Dorsolateral prefrontal cortex (tissue), 120 donors: ENCODE measurements at regions of chr15 and their contacts with region 1.

Region 1: DNA sequence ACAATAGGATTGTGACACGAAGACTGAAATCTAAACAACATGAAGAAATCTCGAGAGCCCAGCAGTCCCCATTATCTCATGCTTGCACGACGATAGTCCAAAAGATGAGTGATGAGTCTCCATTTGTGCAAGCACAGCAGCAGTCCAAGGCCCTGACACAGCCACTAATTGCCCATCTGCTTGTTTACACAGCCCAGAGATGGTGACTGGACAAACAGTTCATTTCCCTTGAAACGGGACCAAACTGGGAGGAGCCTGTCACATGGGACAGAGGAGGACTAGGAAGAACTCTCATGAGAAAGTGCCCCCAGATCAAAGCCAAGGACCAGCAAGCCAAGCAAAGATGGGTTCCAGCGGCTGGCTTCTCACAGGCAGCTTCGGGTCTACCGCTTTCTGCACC is 121.0 kb downstream of the GREM1 start:
- DNase-seq: peak in 9 of 10 donors; percentile 47 to 83 (median 75)
- H3K4me3 ChIP-seq: peak overlapping the region in 33 of 59 donors; percentile 3 to 53 (median 27)
- H3K27ac ChIP-seq: peak overlapping the region; percentile 23 to 97 (median 88)
- H3K27me3 ChIP-seq: no peaks in the 10 kb centered on the region
- CTCF ChIP-seq: no peak

Region 2: DNA sequence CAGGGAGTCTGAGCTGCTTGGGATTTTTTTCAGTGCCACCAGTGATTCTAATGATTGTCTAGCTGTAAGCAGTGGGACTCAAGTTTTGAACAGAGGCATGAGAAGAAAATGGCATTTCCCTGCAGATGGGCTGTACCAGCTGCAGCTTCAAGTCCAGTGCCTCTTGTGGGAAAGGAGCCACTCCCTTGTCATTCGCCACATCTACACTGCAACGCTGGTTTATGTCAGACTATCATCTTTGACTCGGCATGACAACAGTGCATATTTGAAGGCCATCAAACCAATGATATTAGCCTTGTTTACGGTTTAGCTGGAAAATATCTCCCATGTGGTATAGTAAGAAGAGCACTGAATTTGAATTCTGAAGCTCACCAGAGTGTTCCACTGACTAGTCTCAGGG is 175.1 kb before region 1 on chr15:
- intact Hi-C with region 1: loop called in 1 of 2 experiments (anchors 2 kb)
- DNase-seq: no peak
- H3K4me3 ChIP-seq: no peak overlapping the region
- H3K27ac ChIP-seq: peak overlapping the region in 16 of 59 donors; percentile 4 to 51 (median 30)
- H3K27me3 ChIP-seq: no peaks in the 10 kb centered on the region
- CTCF ChIP-seq: no peak

Region 3: DNA sequence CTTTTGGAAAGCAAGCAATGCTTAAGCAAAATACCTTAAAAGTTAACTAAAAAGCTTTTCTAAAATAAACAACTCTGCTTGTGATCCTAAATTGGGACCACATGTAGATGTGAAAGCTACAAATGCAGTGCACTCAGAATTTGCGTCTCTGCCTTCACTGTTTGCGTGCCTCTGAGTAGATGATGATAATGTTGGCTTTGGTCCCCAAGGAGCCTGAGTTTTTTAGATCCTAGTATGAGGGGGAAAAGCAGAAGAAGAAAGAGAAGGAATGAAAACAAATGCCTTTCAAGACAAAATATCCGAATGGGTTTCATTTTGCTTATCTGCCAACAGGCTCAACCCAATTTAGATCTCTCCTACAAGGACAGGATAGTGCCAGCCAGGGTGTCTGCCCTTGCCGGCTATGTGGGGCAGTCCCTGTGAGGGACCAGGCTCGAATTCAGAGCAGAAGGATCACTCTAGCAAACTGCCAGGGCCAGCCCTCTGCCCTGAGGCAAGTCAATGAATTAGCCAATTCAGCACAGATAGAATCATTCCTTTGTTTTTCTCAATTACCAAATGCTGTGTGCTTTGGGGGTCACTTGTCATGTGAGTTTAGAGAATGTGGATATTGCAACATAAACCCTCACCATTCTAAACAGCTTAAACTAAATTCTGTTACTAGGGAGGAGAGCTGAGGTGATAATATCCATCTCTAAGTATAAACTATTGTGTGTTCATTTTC is 168.8 kb before region 1 on chr15:
- intact Hi-C with region 1: loop called in 1 of 2 experiments (anchors 5 kb)
- DNase-seq: peak in 9 of 10 donors; percentile 59 to 87 (median 78)
- H3K4me3 ChIP-seq: peak overlapping the region in 40 of 59 donors; percentile 0 to 55 (median 22)
- H3K27ac ChIP-seq: peak overlapping the region in 58 of 59 donors; percentile 61 to 99 (median 94)
- H3K27me3 ChIP-seq: no peaks in the 10 kb centered on the region
- CTCF ChIP-seq: peak in 10 of 56 donors; percentile 5 to 21 (median 16)

Region 4: DNA sequence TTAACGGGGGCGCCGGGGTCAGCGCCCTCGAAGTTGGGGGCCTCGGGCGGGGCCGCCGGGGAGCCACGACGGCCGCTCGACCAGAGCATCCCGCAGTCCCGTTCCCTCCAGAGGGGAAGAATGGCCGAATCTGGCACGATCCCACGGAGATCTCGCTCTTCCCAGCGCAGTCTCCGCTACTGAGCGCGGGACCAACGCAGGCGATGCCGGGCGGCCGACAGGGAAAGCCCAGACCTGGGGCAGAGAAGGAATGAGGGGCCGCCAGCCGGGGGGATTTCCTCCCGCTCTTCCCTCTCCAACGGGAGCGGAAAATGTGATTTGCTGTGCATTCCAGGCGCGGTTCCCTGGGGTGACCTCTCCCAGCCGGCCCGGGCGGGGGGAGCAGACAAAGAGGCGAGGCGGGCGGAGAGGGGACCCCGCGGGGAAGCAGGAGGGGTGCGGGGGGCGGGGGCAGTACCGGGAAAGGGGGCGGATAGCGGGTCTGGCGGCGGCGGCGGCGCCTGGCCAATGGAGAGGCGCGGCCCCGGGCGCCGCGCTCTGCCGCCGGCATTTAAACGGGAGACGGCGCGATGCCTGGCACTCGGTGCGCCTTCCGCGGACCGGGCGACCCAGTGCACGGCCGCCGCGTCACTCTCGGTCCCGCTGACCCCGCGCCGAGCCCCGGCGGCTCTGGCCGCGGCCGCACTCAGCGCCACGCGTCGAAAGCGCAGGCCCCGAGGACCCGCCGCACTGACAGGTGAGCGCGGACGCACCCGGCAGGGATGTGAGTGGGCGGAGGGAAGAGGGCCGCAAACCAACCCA is 121.2 kb before region 1 on chr15 and contains the start of gene GREM1:
- intact Hi-C with region 1: loop called in 1 of 2 experiments (anchors 5 kb)
- DNase-seq: peak in 4 of 10 donors; percentile 40 to 65 (median 50)
- H3K4me3 ChIP-seq: peak within 1 kb of the TSS; percentile 33 to 79 (median 63)
- H3K27ac ChIP-seq: peak within 1 kb of the TSS in 52 of 59 donors; percentile 10 to 89 (median 76)
- H3K27me3 ChIP-seq: peaks cover 0 to 68% (median 53%) of the 10 kb centered on the region in 45 donors
- CTCF ChIP-seq: no peak
- total RNA-seq, gene GREM1: 2.4 to 117 (median 17.9) TPM

Region 5: DNA sequence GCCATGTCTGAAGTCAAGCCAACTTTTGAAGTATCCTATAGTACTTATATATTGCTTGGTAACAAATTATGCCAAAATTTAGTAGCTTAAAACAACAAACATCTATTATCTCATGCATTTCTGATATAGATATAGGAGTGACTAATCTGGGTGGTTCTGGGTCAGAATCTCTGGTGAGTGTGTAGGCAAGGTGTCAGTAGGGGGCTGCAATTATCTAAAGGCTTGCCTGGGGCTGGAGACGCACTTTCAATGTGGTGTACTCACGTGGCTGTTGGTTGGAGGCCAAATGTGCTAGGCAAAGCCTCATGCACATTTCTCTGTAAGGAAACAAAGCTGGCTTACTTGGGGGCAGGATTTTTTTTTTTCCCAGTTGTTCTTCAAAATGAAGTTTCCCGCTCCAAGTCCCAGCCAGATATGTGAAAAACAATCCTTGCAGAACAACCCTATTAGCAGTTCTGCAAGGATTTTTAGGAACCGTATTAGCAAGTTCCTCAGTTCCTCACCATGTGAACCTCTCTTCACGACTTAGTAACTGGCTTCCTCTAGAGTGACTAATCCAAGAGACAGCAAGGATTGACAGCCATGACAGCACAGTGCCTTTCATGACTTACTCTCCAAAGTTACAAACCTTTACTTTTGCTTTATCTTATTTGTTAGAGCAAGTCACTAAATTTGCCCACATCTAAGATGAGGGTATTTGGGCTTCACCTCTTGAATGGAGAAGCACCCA is 95.2 kb before region 1 on chr15:
- intact Hi-C with region 1: no loop called
- DNase-seq: no peak
- H3K4me3 ChIP-seq: no peak overlapping the region
- H3K27ac ChIP-seq: no peak overlapping the region
- H3K27me3 ChIP-seq: no peaks in the 10 kb centered on the region
- CTCF ChIP-seq: no peak